IMR-90 (cell line): ENCODE measurements at regions of chr3 and their contacts with region 1.

Region 1: GRCh38 chr3:178084938-178085816 is 451.1 kb upstream of the KCNMB2 start:
- DNase-seq: peak; percentile 83
- ATAC-seq: peak; percentile 93
- H3K4me3 ChIP-seq: no peak overlapping the region
- H3K27ac ChIP-seq: no peak overlapping the region; the same call in 1 of the 2 replicates
- H3K4me1 ChIP-seq: peaks cover 9% of the 10 kb centered on the region
- H3K27me3 ChIP-seq: no peaks in the 10 kb centered on the region
- CTCF ChIP-seq: no peak
- POLR2A ChIP-seq: no peak
- RAD21 ChIP-seq: peak; percentile 19; the same call in 1 of the 2 replicates

Region 2: GRCh38 chr3:178097576-178097975 is 12.4 kb after region 1 on chr3:
- CTCF ChIA-PET with region 1: interaction called, 3 read pairs
- POLR2A ChIA-PET with region 1: interaction called, 17 read pairs
- dilution Hi-C with region 1: no loop called
- in situ Hi-C with region 1: no loop called
- intact Hi-C with region 1: no loop called
- DNase-seq: peak; percentile 95
- ATAC-seq: peak; percentile 90
- H3K4me3 ChIP-seq: no peak overlapping the region
- H3K27ac ChIP-seq: peak overlapping the region; percentile 36; the same call in 1 of the 2 replicates
- H3K4me1 ChIP-seq: no peaks in the 10 kb centered on the region
- H3K27me3 ChIP-seq: no peaks in the 10 kb centered on the region
- CTCF ChIP-seq: no peak
- POLR2A ChIP-seq: no peak
- RAD21 ChIP-seq: 0 out of 2 replicates have a peak, but pooled peaks have one; percentile 19

Region 3: DNA sequence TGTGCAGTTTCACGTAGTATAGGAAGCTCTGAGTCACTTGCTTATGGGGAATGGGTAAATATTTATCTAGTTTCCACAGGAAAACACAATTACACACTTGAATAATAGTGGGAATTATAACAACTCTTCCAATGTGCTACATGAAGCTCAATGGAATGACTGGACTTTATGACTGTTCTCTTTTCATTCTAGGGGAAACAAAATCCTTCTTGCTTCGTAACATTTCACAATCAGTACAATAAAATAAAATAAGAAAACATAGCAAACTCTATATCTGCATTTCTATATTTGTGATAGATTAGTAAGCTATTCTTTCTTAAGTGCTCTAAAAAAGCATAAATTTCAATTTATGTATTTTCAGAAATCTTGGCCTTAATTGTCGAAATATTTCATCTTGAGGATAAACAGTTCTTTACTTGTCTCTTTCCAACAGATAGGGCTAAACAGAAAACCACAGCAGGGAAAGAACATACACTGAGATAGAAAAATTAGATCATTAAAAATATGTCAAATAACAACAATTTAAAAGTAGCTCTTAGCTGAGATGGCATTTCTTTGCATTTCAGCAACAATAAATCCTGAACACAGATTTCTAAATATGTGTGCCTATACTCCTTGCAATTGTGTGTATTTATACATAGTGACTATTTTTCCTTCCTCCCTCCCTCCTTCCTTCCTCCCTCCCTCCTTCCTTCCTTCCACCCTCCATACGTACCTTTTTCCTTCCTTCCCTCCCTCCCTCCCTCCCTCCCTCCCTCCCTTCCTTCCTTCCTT is 55.5 kb after region 1 on chr3:
- CTCF ChIA-PET with region 1: no interaction called
- POLR2A ChIA-PET with region 1: no interaction called
- dilution Hi-C with region 1: no loop called
- in situ Hi-C with region 1: no loop called
- intact Hi-C with region 1: no loop called
- DNase-seq: peak; percentile 57
- ATAC-seq: peak; percentile 51
- H3K4me3 ChIP-seq: no peak overlapping the region
- H3K27ac ChIP-seq: no peak overlapping the region
- H3K4me1 ChIP-seq: peaks cover 4% of the 10 kb centered on the region
- H3K27me3 ChIP-seq: no peaks in the 10 kb centered on the region
- CTCF ChIP-seq: no peak
- POLR2A ChIP-seq: no peak
- RAD21 ChIP-seq: no peak

Region 4: GRCh38 chr3:178236555-178237277 is 151.5 kb after region 1 on chr3:
- CTCF ChIA-PET with region 1: no interaction called
- POLR2A ChIA-PET with region 1: no interaction called
- dilution Hi-C with region 1: no loop called
- in situ Hi-C with region 1: no loop called
- intact Hi-C with region 1: no loop called
- DNase-seq: peak; percentile 28
- ATAC-seq: peak; percentile 35; the same call in 1 of the 2 replicates
- H3K4me3 ChIP-seq: no peak overlapping the region
- H3K27ac ChIP-seq: no peak overlapping the region
- H3K4me1 ChIP-seq: no peaks in the 10 kb centered on the region
- H3K27me3 ChIP-seq: no peaks in the 10 kb centered on the region
- CTCF ChIP-seq: no peak
- POLR2A ChIP-seq: no peak
- RAD21 ChIP-seq: no peak